ENCODE measurements at regions of chr14 and their contacts with region 1.

Region 1: DNA sequence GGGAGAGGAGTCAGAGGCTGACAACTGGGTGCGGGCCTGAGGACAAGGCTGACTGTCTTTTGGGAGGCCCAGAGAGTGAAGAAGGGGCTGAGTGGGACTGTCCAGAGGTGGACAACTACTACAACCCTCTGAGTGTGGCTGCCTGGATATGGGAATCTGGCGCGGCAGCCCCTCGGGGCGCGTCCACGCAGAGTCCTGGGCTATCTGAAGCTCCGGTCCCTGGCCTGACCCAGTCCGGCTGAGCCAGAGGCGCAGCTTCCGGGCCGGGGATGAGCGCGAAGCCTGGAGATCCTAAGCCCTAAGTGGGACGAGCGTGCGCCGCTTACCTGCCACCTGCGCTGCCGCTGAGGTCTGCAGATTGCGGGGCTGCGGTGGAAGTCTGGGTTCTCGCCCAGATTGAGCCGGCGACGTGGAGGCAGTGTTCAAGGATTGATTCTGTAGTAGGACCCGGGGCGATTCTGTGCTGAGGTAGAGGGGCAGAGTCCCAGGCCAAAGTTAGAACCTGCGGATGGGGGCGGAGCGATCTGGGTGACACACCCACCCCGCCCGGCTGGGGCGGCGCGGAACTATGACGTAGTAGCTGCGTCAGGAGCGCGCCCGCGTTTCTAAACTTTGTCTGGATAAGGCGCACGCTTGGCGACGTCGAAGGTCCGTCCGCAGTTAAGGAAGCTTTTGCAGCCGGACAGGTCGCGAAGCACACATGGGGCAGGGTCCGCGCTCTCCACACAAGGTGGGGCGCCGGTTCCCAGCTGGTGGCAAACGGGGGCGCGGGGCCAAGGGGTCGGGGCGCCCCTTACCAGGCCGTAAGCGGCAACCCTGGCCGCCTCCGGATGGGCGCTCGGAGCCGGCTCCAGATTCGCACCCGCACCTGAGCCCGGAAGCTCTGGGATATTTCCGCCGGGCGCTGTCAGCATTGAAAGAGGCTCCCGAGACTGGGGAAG is at the starts of genes DHRS1 and NOP9:
- DNase-seq: peak; percentile 91
- H3K4me3 Mint-ChIP-seq: peak within 1 kb of the TSS; percentile 95
- H3K27ac Mint-ChIP-seq: peak within 1 kb of the TSS; percentile 78
- H3K4me1 Mint-ChIP-seq: peaks cover 33% of the 10 kb centered on the region
- H3K27me3 Mint-ChIP-seq: no peaks in the 10 kb centered on the region
- CTCF ChIP-seq: no peak
- total RNA-seq, gene DHRS1: 29.2 and 29.7 TPM in 2 replicates
- total RNA-seq, gene NOP9: 29.8 and 31.9 TPM in 2 replicates

Region 2: DNA sequence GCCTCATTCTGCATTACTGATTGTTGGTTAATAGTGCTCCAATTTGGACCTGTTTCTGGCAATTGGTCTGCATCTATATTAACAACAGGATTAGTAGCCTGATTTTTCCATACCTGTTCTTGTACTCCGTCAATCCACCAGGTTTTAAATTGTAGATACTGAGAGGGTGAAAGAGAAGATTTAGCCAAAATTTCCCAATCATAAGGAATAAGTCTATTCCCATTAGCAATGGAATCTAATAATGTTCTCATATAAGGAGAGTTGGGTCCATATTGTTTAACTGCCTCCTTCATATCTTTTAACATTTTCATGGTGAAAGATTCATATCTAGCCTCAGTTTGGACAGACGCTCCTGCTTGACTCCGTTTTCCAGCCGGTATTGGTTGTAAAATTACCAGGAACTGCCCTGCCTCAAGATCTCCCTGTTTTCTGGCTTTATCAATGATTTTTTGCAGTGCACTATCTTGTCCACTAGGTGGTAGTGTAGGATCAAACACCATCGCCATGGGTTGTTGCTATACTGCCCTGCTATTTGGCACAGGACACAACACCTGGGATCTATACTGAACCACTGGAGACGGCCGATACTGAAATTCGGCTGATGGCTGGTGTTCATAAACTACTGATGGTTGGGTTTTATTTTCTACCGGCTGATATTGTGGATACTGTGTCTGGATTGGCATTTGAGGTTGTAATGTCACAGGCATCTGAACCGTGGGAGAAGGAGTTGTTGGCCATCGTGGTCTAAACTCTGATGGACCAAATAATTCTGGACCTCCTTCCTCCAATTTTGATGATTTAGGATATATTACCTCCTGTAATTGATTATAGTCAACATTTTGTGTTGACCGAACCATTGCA is 285.6 kb before region 1 on chr14:
- CTCF ChIA-PET with region 1: no interaction called
- POLR2A ChIA-PET with region 1: no interaction called
- intact Hi-C with region 1: loop called (anchors 2 kb)
- DNase-seq: peak; percentile 83
- H3K4me3 Mint-ChIP-seq: no peak overlapping the region
- H3K27ac Mint-ChIP-seq: no peak overlapping the region
- H3K4me1 Mint-ChIP-seq: no peaks in the 10 kb centered on the region
- H3K27me3 Mint-ChIP-seq: peaks cover 20% of the 10 kb centered on the region
- CTCF ChIP-seq: peak; percentile 80

Region 3: GRCh38 chr14:24036169-24036962 is 263.2 kb before region 1 on chr14:
- CTCF ChIA-PET with region 1: no interaction called
- POLR2A ChIA-PET with region 1: no interaction called
- intact Hi-C with region 1: no loop called
- DNase-seq: peak; percentile 69
- H3K4me3 Mint-ChIP-seq: peak overlapping the region; percentile 76
- H3K27ac Mint-ChIP-seq: peak overlapping the region; percentile 54
- H3K4me1 Mint-ChIP-seq: peaks cover 11% of the 10 kb centered on the region
- H3K27me3 Mint-ChIP-seq: no peaks in the 10 kb centered on the region
- CTCF ChIP-seq: peak; percentile 88

Region 4: DNA sequence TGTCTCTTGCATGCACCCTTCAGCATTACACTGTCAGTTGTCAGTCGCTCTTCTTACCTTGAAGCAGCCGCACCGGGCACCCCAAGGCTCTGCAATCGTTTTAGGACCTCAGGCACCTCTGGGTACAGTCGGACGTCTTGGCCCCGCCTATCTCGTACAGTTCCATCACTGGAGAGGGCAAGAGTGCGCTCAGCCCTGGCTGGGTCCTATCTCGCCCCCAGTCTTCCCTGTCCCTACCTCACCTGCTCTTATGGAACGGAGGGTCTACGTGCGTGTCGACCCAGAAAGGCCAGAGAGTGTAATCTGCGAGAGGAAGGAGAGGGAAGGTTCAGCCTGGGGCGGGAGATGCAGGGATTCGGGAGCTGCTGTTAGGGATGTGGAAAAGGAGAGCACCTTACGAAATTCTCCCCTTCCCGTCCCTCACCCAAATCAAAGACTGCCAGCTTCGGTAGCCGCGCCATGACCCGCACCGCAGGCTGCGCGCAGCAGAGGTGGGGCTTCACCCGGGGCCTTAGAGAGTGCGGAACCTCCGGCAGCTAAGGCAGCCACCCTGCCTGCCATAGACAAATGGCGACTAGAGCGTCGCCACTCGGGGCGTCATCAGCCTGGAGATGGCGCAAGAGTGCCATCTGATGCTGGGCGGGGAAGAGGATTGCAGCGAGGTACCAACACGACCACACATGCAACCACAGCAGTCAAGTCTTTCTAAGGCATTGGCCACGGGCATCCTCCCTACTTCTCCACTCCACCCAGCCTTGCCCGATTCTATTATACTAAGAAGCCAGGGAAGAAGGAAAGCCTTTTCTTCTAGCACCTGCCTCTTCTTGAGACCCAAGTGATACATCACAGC is 83.8 kb before region 1 on chr14 and contains the start of gene MDP1:
- CTCF ChIA-PET with region 1: interaction called, 32 read pairs
- POLR2A ChIA-PET with region 1: interaction called, 69 read pairs
- intact Hi-C with region 1: loop called (anchors 1 kb)
- DNase-seq: peak; percentile 87
- H3K4me3 Mint-ChIP-seq: peak within 1 kb of the TSS; percentile 80
- H3K27ac Mint-ChIP-seq: peak within 1 kb of the TSS; percentile 73
- H3K4me1 Mint-ChIP-seq: peaks cover 20% of the 10 kb centered on the region
- H3K27me3 Mint-ChIP-seq: no peaks in the 10 kb centered on the region
- CTCF ChIP-seq: peak; percentile 25
- total RNA-seq, gene MDP1: 11.0 and 20.2 TPM in 2 replicates

Region 5: DNA sequence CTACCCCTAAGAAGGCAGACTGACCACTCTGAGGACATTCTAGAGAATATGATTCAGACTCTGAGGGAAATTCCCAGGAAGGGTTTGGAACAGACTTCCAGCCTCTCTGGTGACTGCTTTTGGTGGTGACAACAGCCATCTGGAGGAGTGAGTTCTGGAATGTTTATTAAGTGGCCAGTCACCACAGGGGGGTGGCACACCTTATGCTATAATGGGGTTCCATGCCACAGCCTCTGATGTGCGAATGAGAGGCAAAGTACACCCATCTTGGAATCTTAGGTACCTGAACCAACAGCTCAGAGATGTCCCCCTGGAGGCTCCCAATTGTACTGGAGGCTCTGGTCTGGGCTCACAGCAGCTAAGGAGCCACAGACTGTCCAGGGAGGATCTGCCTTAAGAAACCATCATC is 47.6 kb before region 1 on chr14:
- CTCF ChIA-PET with region 1: interaction called, 414 read pairs
- POLR2A ChIA-PET with region 1: interaction called, 16 read pairs
- intact Hi-C with region 1: no loop called
- DNase-seq: no peak
- H3K4me3 Mint-ChIP-seq: no peak overlapping the region
- H3K27ac Mint-ChIP-seq: no peak overlapping the region
- H3K4me1 Mint-ChIP-seq: peaks cover 7% of the 10 kb centered on the region
- H3K27me3 Mint-ChIP-seq: no peaks in the 10 kb centered on the region
- CTCF ChIP-seq: no peak

Region 6: GRCh38 chr14:24279301-24280186 is 20.0 kb before region 1 on chr14:
- CTCF ChIA-PET with region 1: interaction called, 392 read pairs
- POLR2A ChIA-PET with region 1: interaction called, 142 read pairs
- intact Hi-C with region 1: no loop called
- DNase-seq: peak; percentile 57
- H3K4me3 Mint-ChIP-seq: no peak overlapping the region
- H3K27ac Mint-ChIP-seq: peak overlapping the region; percentile 47
- H3K4me1 Mint-ChIP-seq: peaks cover 29% of the 10 kb centered on the region
- H3K27me3 Mint-ChIP-seq: no peaks in the 10 kb centered on the region
- CTCF ChIP-seq: no peak

Region 7: DNA sequence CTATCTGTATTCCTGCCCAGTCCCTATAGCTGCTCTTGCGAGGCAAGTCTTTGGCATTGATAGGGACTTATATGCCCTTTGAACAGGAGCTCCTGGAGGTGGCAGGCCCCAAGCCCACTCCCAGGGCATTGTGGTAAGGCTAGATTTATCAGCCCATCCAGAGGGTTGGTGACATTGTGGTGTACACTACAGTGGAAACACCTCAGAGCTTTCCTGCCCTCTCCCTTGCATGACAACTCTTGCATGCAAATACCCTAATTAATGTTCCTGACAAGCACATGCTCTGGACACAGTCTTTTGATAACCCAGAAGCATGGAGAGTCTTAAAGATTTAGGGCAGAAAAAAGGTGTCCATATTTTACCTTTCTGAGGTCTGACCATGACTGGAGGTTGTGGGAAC is 41.1 kb after region 1 on chr14:
- CTCF ChIA-PET with region 1: no interaction called
- POLR2A ChIA-PET with region 1: no interaction called
- intact Hi-C with region 1: no loop called
- DNase-seq: no peak
- H3K4me3 Mint-ChIP-seq: no peak overlapping the region
- H3K27ac Mint-ChIP-seq: no peak overlapping the region
- H3K4me1 Mint-ChIP-seq: no peaks in the 10 kb centered on the region
- H3K27me3 Mint-ChIP-seq: peaks cover 11% of the 10 kb centered on the region
- CTCF ChIP-seq: no peak

Region 8: GRCh38 chr14:24442273-24443052 is 142.9 kb after region 1 on chr14 and contains the start of gene SDR39U1:
- CTCF ChIA-PET with region 1: interaction called, 15 read pairs
- POLR2A ChIA-PET with region 1: interaction called, 14 read pairs
- intact Hi-C with region 1: no loop called
- DNase-seq: peak; percentile 99
- H3K4me3 Mint-ChIP-seq: peak within 1 kb of the TSS; percentile 78
- H3K27ac Mint-ChIP-seq: peak within 1 kb of the TSS; percentile 100
- H3K4me1 Mint-ChIP-seq: peaks cover 8% of the 10 kb centered on the region
- H3K27me3 Mint-ChIP-seq: no peaks in the 10 kb centered on the region
- CTCF ChIP-seq: no peak
- total RNA-seq, gene SDR39U1: 53.2 and 58.7 TPM in 2 replicates

Measured in MCF 10A (cell line).